ENCODE measurements at regions of chr7 and their contacts with region 1.

Region 1: GRCh38 chr7:107150375-107151073 is 18.3 kb upstream of the HBP1 start:
- DNase-seq: peak; percentile 7 to 46
- ATAC-seq: peak; percentile 58 to 64
- H3K4me3 ChIP-seq: no peak overlapping the region
- H3K27ac ChIP-seq: no peak overlapping the region
- H3K4me1 ChIP-seq: peaks cover 3 to 6% of the 10 kb centered on the region in 2 donors
- H3K27me3 ChIP-seq: no peaks in the 10 kb centered on the region
- CTCF ChIP-seq: peak; percentile 34 to 66 (median 50)
- POLR2A ChIP-seq: no peak

Region 2: DNA sequence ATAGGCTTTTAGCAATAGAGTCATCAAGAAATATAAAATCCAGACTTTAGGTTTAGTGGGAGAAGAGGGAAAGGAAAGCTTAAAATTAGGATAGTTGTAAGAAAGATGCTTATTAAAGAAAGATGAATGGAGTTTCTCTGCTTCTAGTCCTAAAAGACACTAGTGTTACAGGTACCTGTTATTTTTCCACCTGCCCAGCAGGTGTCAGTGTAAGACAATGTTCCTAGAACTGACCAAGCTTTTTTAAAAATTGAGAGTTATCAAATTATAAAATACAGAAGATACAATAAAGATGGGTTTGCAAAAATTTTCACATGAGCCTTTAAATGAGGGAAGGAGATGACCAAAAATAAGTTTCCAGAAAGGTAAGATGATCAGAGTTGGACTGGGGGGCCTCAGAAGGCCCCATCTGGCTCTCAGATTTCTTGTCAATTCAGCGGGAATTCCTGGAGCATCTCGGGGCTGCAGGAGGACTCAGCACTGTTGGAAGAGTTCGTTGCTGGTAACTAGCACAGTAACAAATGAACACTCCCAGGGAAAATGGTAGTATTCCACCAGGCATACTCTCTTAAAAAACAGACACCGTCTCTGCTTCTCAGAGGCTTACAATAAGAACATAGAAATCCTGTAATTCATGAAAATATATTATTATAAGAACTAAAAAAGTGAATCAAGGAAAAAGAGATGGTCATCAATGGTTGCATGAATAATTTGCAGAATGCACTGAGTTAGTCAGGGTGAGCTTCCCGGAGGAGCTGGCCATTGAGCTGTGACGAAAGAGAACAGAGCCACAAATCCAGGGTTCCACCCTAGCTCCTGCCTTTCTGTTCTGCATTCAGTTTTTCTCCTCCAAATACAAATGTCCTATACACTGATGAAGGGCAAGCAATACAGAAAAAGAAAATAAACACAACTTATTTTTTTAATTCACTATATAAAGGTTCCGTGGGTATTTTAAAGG is 357.2 kb before region 1 on chr7:
- in situ Hi-C with region 1: loop called (anchors 5 to 10 kb)
- intact Hi-C with region 1: loop called (anchors 2 kb)
- DNase-seq: no peak
- ATAC-seq: no peak
- H3K4me3 ChIP-seq: no peak overlapping the region
- H3K27ac ChIP-seq: no peak overlapping the region
- H3K4me1 ChIP-seq: no peaks in the 10 kb centered on the region
- H3K27me3 ChIP-seq: no peaks in the 10 kb centered on the region
- CTCF ChIP-seq: peak in 4 of 5 experiments; percentile 28 to 51 (median 36)
- POLR2A ChIP-seq: no peak

Region 3: DNA sequence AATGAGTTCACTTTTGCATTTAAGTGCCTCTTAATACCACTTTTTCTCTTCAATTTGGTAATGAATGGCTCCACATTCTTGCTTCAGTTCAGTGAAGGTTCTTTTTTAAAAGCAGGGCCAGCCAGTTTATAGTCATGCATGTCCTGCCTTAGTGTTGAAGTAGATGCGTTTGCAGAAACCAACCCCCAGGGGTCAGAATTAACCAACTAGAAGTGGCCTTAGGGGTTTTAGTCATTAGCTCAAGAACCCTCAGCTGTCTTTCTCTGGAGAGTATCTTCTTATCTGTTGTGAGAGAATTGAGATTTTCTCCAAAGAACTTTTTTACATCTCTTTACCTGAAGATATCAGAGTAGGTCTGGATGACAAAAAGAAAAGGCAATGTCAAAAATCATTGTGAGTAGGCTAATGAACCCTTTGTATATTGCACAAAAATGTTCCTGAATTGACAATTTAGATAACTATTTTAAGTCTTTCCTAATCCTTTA is 203.2 kb before region 1 on chr7:
- in situ Hi-C with region 1: loop called in 2 of 4 experiments (anchors 10 to 25 kb)
- intact Hi-C with region 1: loop called (anchors 2 kb)
- DNase-seq: no peak
- ATAC-seq: no peak
- H3K4me3 ChIP-seq: no peak overlapping the region
- H3K27ac ChIP-seq: no peak overlapping the region
- H3K4me1 ChIP-seq: no peaks in the 10 kb centered on the region
- H3K27me3 ChIP-seq: no peaks in the 10 kb centered on the region
- CTCF ChIP-seq: peak in 3 of 5 experiments; percentile 7 to 39 (median 17)
- POLR2A ChIP-seq: no peak